BJ (cell line): ENCODE measurements at regions of chr10 and their contacts with region 1.

Region 1: GRCh38 chr10:43408710-43409384 is at the start of gene HNRNPF:
- DNase-seq: peak; percentile 78
- H3K4me3 ChIP-seq: peak within 1 kb of the TSS; percentile 71
- H3K27me3 ChIP-seq: no peaks in the 10 kb centered on the region
- CTCF ChIP-seq: no peak
- polyA plus RNA-seq, gene HNRNPF: 165 and 172 TPM in 2 replicates

Region 2: GRCh38 chr10:43229208-43230061 is 179.4 kb before region 1 on chr10:
- CTCF ChIA-PET with region 1: no interaction called
- POLR2A ChIA-PET with region 1: no interaction called
- DNase-seq: no peak
- H3K4me3 ChIP-seq: no peak overlapping the region
- H3K27me3 ChIP-seq: peaks cover 40% of the 10 kb centered on the region
- CTCF ChIP-seq: no peak

Region 3: GRCh38 chr10:43436400-43437140 is 27.7 kb after region 1 on chr10 and contains the start of gene ZNF487:
- CTCF ChIA-PET with region 1: no interaction called
- POLR2A ChIA-PET with region 1: interaction called, 13 read pairs
- DNase-seq: peak; percentile 36
- H3K4me3 ChIP-seq: peak within 1 kb of the TSS; percentile 90
- H3K27me3 ChIP-seq: no peaks in the 10 kb centered on the region
- CTCF ChIP-seq: peak; percentile 37
- polyA plus RNA-seq, gene ZNF487: 4.5 and 4.9 TPM in 2 replicates